ENCODE measurements at regions of chr7 and their contacts with region 1.

Region 1: GRCh38 chr7:105876091-105876963 is at the start of gene ATXN7L1:
- DNase-seq: peak; percentile 96
- ATAC-seq: peak; percentile 85
- H3K4me3 Mint-ChIP-seq: peak within 1 kb of the TSS; percentile 82
- H3K27ac Mint-ChIP-seq: peak within 1 kb of the TSS; percentile 77
- H3K4me1 Mint-ChIP-seq: peaks cover 65% of the 10 kb centered on the region
- H3K27me3 Mint-ChIP-seq: peaks cover 3% of the 10 kb centered on the region
- total RNA-seq, gene ATXN7L1: 11.2 to 16.9 TPM

Region 2: GRCh38 chr7:105678811-105679495 is 197.4 kb before region 1 on chr7:
- CTCF ChIA-PET with region 1: interaction called, 3 read pairs
- POLR2A ChIA-PET with region 1: no interaction called
- intact Hi-C with region 1: loop called (anchors 2 to 5 kb)
- DNase-seq: peak; percentile 62
- ATAC-seq: peak; percentile 21
- H3K4me3 Mint-ChIP-seq: peak overlapping the region; percentile 83
- H3K27ac Mint-ChIP-seq: peak overlapping the region; percentile 93
- H3K4me1 Mint-ChIP-seq: peaks cover 63% of the 10 kb centered on the region
- H3K27me3 Mint-ChIP-seq: no peaks in the 10 kb centered on the region

Region 3: GRCh38 chr7:105759670-105760550 is 116.4 kb before region 1 on chr7:
- CTCF ChIA-PET with region 1: interaction called, 12 read pairs
- POLR2A ChIA-PET with region 1: no interaction called
- intact Hi-C with region 1: loop called (anchors 2 to 5 kb)
- DNase-seq: peak; percentile 47
- ATAC-seq: peak; percentile 20
- H3K4me3 Mint-ChIP-seq: no peak overlapping the region
- H3K27ac Mint-ChIP-seq: no peak overlapping the region
- H3K4me1 Mint-ChIP-seq: peaks cover 28% of the 10 kb centered on the region
- H3K27me3 Mint-ChIP-seq: no peaks in the 10 kb centered on the region

Region 4: DNA sequence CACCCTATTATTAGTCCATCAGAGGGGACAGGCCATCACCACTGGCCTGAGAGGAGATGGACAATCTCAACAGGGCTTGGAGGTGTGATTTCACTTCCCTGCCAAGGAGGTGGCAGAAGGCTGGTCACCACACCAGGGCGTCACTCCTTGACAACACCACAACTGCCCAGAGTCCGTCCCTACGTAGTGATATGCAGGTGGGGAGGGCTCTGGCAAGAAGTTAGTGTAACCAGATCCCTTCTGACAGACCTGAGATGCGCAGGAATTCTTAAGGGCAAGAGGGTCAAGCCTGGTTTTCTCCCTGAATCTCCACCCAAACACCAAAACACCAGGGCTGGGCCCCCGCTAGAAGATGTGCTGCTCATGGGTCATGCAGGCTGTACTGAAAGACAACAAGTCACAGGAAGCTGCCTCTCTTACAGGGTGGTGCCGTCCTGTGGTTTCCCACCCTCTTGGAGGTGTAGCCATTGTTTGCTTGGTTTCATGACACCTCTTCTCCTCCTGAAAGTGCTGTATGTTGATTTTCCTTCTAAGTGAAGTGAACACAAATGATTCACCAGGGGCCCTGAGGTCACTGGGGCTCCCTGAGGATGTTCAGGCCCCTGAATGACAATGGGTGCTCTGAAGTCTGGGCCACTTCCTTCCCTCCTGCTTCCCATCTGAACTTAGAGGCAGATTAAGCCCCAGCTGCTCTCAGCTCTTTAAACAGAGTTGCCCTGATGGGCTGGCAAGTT is 27.0 kb before region 1 on chr7:
- CTCF ChIA-PET with region 1: interaction called, 4 read pairs
- POLR2A ChIA-PET with region 1: interaction called, 4 read pairs
- intact Hi-C with region 1: loop called (anchors 1 to 2 kb)
- DNase-seq: peak; percentile 82
- ATAC-seq: peak; percentile 96
- H3K4me3 Mint-ChIP-seq: peak overlapping the region; percentile 32
- H3K27ac Mint-ChIP-seq: peak overlapping the region; percentile 59
- H3K4me1 Mint-ChIP-seq: peaks cover 52% of the 10 kb centered on the region
- H3K27me3 Mint-ChIP-seq: no peaks in the 10 kb centered on the region

Region 5: DNA sequence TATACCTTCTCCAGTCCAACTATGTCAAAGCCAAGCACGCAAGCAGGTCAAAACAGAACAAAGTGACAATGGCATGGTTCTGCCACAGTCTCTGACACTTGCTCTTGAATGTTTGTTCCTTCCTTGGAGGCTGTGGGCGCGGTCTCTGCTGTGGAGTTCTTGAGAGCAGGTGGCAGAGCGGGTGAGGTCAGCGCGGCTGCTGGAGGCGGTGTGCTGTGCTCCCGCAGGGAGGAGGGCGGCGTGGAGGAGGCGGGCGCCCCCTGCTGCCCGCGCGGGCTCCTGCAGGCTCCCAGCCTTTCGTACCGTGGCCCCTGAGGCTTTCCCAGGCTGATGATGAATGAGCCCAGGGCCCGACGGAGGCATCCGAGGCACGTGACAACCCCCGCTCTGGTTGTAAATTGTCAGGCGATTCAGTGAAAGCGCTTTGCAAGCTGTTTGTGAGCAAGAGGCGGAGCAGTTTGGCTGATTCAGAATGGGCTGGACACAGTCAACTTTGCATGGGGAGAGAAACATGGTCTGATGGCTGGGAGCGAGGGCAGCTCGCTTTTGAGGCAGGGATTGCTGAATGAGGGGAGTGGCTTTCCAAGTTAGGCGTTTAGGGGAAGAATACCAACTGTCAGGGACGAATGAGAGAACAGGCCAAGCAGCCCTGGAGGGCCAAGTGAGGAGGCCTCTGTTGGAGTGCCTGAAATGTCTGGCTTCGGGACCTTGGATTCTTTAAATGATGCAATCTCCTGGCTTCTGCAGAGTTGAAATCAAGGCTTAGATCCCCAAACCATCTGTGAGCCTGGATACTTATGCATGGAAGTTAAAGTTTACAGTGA is 133.3 kb after region 1 on chr7:
- CTCF ChIA-PET with region 1: interaction called, 3 read pairs
- POLR2A ChIA-PET with region 1: no interaction called
- intact Hi-C with region 1: loop called (anchors 1 to 2 kb)
- DNase-seq: peak; percentile 92
- ATAC-seq: peak; percentile 99
- H3K4me3 Mint-ChIP-seq: no peak overlapping the region
- H3K27ac Mint-ChIP-seq: peak overlapping the region; percentile 4
- H3K4me1 Mint-ChIP-seq: peaks cover 21% of the 10 kb centered on the region
- H3K27me3 Mint-ChIP-seq: peaks cover 2% of the 10 kb centered on the region

Region 6: GRCh38 chr7:106112117-106112971 is 236.0 kb after region 1 on chr7 and contains the start of gene SYPL1:
- CTCF ChIA-PET with region 1: no interaction called
- POLR2A ChIA-PET with region 1: no interaction called
- intact Hi-C with region 1: loop called in 1 of 2 experiments (anchors 1 kb)
- DNase-seq: peak; percentile 95
- ATAC-seq: peak; percentile 86
- H3K4me3 Mint-ChIP-seq: peak within 1 kb of the TSS; percentile 79
- H3K27ac Mint-ChIP-seq: peak within 1 kb of the TSS; percentile 89
- H3K4me1 Mint-ChIP-seq: peaks cover 64% of the 10 kb centered on the region
- H3K27me3 Mint-ChIP-seq: no peaks in the 10 kb centered on the region
- total RNA-seq, gene SYPL1: 23.7 to 28.8 TPM